Prostate gland (tissue), 2 donors: ENCODE measurements at regions of chr21 and their contacts with region 1.

Region 1: DNA sequence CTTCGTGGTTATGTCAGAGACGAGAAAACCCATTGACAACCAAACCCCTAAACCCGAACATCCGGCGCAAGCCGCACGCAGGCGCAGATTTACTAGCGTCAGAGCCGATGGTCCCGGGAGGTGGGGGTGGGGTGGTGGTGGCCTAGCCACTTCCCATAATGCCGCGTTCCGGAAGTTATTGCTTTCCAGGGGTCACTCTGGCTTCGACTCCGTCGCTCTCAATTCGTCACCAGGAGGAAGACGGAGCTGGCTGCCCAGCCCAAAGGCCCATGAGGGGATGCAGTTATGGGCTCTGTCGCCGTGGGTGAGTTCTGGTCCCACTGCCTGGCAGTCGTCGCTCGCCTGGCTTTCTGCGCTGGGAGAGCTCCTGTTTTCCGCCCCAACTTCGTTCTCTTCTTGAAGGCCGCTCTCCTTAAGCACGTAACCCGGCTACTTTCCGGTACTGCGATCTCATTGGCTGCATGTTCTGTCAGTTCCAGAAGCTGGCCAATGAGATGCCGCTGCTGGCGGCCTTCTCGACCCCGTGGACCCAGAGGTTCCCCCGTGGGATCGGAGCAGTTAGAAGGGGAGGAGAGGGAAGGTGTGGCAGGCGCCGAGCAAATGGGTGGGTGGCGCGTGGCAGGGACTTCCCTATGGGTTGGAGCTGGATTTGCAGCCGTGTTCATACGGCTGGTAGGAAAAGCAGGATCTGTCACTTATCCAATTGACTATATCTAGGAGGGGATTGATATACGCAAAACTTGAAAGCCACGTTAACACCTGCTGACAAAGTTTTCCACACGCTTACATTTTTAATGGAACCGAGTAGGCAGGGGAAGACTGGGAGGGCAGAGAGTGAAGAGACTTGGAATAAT is at the start of gene USP16:
- DNase-seq: peak; percentile 95
- H3K4me3 ChIP-seq: peak within 1 kb of the TSS; percentile 64 to 66
- H3K27ac ChIP-seq: peak within 1 kb of the TSS; percentile 96 to 97
- H3K4me1 ChIP-seq: peaks cover 4% of the 10 kb centered on the region
- H3K27me3 ChIP-seq: no peaks in the 10 kb centered on the region
- CTCF ChIP-seq: peak in 2 of 4 experiments; percentile 30 to 31
- POLR2A ChIP-seq: no peak
- total RNA-seq, gene USP16: 27.1 to 35.6 TPM

Region 2: GRCh38 chr21:28992526-28993292 is 32.0 kb before region 1 on chr21 and contains the start of gene LTN1:
- intact Hi-C with region 1: loop called (anchors 2 kb)
- DNase-seq: peak; percentile 99
- H3K4me3 ChIP-seq: peak within 1 kb of the TSS; percentile 56 to 75
- H3K27ac ChIP-seq: peak within 1 kb of the TSS; percentile 75 to 89
- H3K4me1 ChIP-seq: no peaks in the 10 kb centered on the region
- H3K27me3 ChIP-seq: no peaks in the 10 kb centered on the region
- CTCF ChIP-seq: peak in 2 of 4 experiments; percentile 25 to 36
- POLR2A ChIP-seq: peak; percentile 48
- total RNA-seq, gene LTN1: 24.6 to 29.5 TPM

Region 3: DNA sequence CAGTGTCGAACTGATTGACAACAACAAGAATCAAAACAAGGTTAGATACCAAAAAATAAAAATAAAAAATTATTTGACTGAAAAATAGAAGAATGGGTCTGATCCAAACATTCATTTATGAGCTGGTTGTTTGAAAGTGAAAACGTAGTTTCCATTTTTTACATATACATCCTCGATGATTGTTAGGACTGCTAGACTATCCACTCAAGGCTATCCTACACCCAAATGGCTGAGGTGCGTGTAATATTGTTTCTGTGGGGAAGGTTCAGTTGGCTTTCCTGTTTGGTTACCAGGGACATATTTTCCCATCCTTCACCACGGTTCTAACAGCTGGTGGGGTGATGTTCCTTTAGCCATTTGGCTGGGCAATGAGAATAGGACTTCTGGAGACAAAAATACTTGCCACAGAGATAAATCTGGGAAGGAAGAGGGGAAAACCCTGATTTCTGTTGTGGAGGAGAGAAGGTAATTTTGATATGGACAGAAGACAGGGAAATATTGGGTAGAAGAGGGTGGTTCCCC is 172.0 kb after region 1 on chr21:
- intact Hi-C with region 1: no loop called
- DNase-seq: no peak
- H3K4me3 ChIP-seq: no peak overlapping the region
- H3K27ac ChIP-seq: no peak overlapping the region
- H3K4me1 ChIP-seq: peaks cover 2% of the 10 kb centered on the region
- H3K27me3 ChIP-seq: no peaks in the 10 kb centered on the region
- CTCF ChIP-seq: no peak
- POLR2A ChIP-seq: no peak